Tibial artery (tissue), 4 donors: ENCODE measurements at regions of chr5 and their contacts with region 1.

Region 1: DNA sequence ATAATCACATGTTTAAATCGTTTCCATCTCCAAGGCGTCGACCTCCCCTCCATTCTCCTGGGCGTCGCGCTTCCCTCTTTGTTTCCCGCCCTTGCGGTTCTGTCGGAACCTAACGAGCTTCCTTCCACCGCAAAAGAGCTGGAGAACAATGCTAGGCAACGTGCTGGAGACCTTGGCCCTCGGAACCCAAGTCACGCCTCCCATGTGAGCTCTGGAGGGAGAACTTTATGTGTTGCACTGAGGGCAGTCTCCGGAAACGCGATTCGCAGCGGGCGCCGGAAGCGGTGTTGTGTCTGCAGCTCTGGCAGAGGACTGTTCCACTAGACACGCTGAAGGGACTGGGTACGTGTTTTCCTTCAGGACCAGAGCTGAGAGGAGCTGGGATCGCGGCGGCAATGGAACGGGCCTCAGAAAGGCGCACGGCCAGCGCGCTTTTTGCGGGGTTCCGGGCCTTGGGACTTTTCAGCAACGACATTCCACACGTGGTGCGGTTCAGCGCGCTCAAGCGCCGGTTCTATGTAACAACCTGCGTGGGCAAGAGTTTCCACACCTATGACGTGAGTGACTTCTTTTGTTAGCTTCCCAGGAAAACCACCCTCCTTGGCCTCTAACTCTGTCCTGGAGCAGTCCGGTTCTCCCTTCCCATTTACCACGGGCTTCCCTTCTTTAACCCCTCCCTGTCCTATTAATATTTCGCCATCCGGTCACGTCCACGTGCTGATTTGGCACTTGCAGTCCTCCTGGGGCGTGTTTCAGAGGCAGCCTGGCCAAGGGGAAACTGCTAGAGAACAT is at the start of gene WDR36:
- DNase-seq: peak; percentile 88 to 90
- H3K4me3 ChIP-seq: peak within 1 kb of the TSS; percentile 71 to 92
- H3K27ac ChIP-seq: peak within 1 kb of the TSS; percentile 74 to 84
- H3K4me1 ChIP-seq: peaks cover 0 to 18% (median 12%) of the 10 kb centered on the region in 4 donors
- H3K27me3 ChIP-seq: no peaks in the 10 kb centered on the region
- CTCF ChIP-seq: peak in 1 of 2 experiments; percentile 14

Region 2: DNA sequence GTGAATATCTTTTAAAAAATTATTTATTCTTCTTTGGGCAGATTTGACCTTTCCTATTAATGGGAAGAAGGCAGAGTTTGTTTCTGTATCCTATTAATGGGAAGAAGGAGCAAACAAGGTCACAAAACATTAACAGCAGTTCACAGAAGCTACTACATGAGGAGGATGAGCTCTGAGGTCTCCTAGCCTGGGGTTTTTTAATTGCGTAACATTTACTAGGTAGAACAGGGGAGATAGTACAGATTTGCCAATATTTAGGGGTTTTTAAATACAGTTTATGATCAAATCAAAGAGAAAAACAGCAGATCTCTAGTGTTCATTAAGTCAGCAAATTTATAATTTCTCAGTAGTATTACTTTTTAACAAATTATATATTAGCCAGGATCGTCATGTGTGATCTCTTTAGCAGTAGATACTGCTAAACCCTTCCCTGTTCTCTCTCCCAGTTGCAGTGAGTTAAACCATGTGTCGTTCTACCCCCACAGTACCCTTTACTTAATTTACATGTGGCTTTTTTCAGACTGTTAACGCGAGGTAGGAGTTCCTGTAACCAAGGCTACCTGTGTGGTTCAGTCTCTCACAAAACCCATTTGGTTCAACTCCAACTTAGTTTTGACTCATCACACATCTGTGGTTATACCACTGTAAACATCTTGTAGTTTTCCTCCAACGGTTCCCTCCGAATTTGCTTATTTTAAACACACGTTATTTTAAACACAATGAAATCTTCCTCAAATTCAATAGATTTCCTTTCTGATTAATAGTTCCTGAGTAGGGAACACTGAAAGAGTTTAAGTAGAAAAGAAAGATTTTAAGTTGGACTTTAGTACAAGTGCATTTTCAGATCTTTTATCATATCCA is 340.1 kb before region 1 on chr5:
- intact Hi-C with region 1: loop called (anchors 5 kb)
- DNase-seq: no peak
- H3K4me3 ChIP-seq: no peak overlapping the region
- H3K27ac ChIP-seq: no peak overlapping the region
- H3K4me1 ChIP-seq: no peaks in the 10 kb centered on the region
- H3K27me3 ChIP-seq: no peaks in the 10 kb centered on the region
- CTCF ChIP-seq: no peak